A673 (cell line): ENCODE measurements at regions of chr1 and their contacts with region 1.

Region 1: GRCh38 chr1:89908672-89909436 is 86.1 kb upstream of the ZNF326 start:
- DNase-seq: peak; percentile 97
- H3K4me3 ChIP-seq: peak overlapping the region; percentile 0
- H3K27ac ChIP-seq: peak overlapping the region; percentile 92
- H3K4me1 ChIP-seq: peaks cover 87% of the 10 kb centered on the region
- H3K27me3 ChIP-seq: no peaks in the 10 kb centered on the region
- CTCF ChIP-seq: no peak

Region 2: GRCh38 chr1:89706700-89707012 is 202.2 kb before region 1 on chr1:
- CTCF ChIA-PET with region 1: no interaction called
- POLR2A ChIA-PET with region 1: no interaction called
- intact Hi-C with region 1: no loop called
- DNase-seq: no peak
- H3K4me3 ChIP-seq: no peak overlapping the region
- H3K27ac ChIP-seq: no peak overlapping the region
- H3K4me1 ChIP-seq: peaks cover 21% of the 10 kb centered on the region
- H3K27me3 ChIP-seq: no peaks in the 10 kb centered on the region
- CTCF ChIP-seq: no peak

Region 3: GRCh38 chr1:89820422-89821321 is 88.2 kb before region 1 on chr1 and contains the start of gene LRRC8D:
- CTCF ChIA-PET with region 1: no interaction called
- POLR2A ChIA-PET with region 1: no interaction called
- intact Hi-C with region 1: loop called (anchors 5 kb)
- DNase-seq: peak; percentile 90
- H3K4me3 ChIP-seq: peak within 1 kb of the TSS; percentile 86
- H3K27ac ChIP-seq: peak within 1 kb of the TSS; percentile 89
- H3K4me1 ChIP-seq: peaks cover 39% of the 10 kb centered on the region
- H3K27me3 ChIP-seq: no peaks in the 10 kb centered on the region
- CTCF ChIP-seq: no peak
- total RNA-seq, gene LRRC8D: 59.4 and 67.5 TPM in 2 replicates

Region 4: DNA sequence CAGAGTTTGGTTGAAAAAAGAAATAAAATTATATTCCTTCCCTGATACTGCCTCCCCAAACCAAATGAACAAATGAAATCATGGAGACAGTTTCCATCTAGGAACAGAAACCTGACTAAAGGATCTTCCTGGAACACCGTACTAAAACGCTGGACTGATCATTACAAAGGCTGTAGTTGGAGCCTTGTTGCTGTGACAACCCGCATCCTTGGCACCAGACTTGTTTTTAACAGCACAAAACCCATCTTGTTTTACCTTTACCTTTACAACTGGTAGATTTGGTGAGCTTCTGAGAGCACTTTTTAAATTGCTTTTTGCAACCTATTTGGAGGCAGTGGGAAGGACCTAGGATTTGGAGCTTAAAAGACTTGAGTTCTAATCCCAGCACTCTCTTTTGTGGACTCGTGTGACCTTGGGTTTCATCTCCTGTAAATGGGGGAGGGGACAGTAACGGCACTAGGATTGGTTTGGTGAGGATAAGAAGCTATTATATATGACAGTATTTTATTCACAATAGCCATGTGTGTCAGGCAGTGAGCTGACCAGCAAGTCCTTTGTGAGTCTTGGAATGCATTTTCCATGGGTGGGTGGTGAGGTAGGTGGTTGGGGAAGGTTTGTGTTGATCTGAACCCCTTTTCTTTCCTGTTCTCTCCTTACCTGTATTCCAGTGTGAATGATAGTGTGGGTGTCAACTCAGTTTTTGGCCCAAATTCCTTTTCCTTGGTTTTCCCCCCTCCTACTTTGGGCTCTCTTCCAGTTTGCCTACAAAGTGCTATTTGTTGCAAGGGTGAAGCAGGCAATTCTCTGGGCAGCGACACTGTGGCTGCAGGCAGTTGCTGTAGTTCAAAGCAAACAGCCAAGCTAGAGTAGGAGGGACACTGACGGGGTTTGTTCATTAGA is 75.4 kb before region 1 on chr1:
- CTCF ChIA-PET with region 1: no interaction called
- POLR2A ChIA-PET with region 1: no interaction called
- intact Hi-C with region 1: no loop called
- DNase-seq: no peak
- H3K4me3 ChIP-seq: no peak overlapping the region
- H3K27ac ChIP-seq: no peak overlapping the region
- H3K4me1 ChIP-seq: peaks cover 56% of the 10 kb centered on the region
- H3K27me3 ChIP-seq: no peaks in the 10 kb centered on the region
- CTCF ChIP-seq: no peak

Region 5: DNA sequence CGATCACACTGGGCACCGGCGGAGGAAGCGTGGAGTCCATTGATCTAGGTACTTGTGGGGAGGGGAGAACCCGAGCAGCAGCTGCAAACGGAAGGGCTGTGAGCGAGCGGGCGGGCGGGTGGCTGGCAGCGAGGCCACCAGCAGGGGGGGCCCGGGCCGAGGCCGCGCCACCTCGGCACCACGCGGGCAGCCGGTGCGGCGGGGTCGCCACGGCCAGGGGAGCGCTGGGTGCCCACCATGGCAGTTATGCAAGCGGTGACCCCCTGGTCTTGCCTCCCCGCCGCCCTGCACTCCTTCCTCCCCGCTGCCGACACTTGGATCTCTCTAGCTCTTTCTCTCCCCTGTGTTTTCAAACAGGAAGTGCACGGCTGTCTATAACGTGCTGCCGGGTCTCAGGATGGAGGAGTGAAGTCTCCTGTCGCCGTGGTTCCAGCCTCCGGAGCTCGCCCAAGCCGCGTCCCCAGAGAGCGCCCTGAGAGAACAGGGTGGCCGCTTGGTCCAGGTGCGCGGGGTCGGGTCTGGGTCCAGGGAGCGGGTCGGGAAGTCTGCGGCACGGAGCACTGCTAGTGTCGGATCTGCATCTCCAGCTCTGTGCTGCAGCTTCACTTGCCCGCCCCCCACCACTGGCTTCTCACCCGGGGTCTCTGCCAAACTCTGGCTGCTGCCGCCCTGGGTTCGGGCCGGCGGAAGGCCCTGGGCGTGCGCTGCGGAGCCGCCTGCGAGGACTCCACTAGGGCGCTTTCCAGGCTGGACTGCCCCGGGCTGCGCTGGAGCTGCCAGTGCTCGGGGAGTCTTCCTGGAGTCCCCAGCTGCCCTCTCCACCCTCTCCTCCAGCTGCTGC is 65.4 kb before region 1 on chr1:
- CTCF ChIA-PET with region 1: no interaction called
- POLR2A ChIA-PET with region 1: interaction called, 9 read pairs
- intact Hi-C with region 1: loop called (anchors 5 kb)
- DNase-seq: peak; percentile 82
- H3K4me3 ChIP-seq: peak overlapping the region; percentile 57
- H3K27ac ChIP-seq: peak overlapping the region; percentile 49
- H3K4me1 ChIP-seq: peaks cover 44% of the 10 kb centered on the region
- H3K27me3 ChIP-seq: no peaks in the 10 kb centered on the region
- CTCF ChIP-seq: peak; percentile 56

Region 6: DNA sequence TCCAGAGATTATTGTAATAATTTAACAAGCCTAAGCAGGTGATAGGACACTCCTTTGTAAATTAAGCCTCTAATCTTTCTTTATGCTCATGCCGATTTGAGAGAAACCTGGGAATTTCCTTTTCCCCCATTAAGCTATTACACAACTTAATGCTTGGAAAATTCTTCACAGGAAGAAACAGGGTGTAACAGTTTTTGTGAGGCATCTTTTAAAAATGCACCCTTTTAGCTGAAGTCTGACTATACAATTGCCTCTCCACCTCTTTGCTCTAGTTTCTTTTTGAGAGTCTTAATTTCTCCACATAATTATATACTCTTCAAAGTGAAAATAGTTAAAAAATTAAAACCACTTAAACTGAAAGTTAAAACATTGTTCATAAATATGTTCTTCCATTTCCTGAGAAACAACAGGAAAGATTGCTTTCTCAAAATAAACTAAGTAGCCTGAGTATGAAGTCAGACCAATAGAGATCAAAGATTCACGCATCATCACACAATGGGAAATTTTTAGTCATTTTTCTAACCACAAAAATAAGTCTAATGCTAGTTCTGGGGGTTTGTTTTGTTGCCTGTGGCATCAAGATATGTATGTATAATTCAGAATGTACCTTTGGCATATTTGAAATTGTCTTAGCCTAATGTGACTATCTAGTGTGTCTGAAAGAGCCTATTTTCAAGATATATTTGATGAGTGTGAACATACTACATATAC is 53.3 kb before region 1 on chr1:
- CTCF ChIA-PET with region 1: no interaction called
- POLR2A ChIA-PET with region 1: no interaction called
- intact Hi-C with region 1: no loop called
- DNase-seq: no peak
- H3K4me3 ChIP-seq: no peak overlapping the region
- H3K27ac ChIP-seq: no peak overlapping the region
- H3K4me1 ChIP-seq: peaks cover 16% of the 10 kb centered on the region
- H3K27me3 ChIP-seq: no peaks in the 10 kb centered on the region
- CTCF ChIP-seq: no peak

Region 7: DNA sequence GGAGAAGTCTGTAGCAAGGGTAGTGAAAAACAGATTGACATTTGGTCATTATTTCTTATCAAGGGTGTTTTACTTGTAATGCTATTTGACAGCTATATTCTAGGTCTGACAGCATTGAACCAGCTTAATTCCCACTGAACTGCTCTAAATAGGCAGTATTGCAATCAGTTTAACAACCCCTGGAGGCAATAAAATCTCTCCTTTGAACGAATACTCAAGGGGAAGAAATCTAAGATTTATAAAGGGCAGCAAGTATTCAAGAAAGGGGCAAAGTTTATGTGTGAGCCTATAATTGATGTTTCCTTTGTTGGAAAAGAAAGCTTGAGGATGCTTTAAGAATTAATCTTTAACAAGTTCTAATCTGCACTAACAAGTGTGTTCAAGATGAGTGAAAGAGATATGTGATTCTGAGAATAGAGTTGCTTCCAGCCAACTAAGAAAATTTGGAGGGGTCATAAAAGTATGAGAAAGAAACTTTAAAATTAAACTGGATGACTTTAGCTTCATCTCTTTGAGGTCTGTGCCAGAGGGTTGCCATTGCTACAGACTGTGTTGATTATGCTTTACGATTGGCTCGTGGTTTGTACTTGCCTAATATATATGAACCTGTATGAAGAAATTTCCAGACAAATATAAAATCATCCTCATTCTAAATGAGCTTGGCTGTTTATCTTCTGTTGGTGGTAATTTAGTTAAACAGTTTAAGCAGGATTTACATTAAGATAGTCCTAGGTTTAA is 158.5 kb after region 1 on chr1:
- CTCF ChIA-PET with region 1: no interaction called
- POLR2A ChIA-PET with region 1: no interaction called
- intact Hi-C with region 1: loop called (anchors 5 kb)
- DNase-seq: peak; percentile 96
- H3K4me3 ChIP-seq: no peak overlapping the region
- H3K27ac ChIP-seq: peak overlapping the region; percentile 95
- H3K4me1 ChIP-seq: peaks cover 55% of the 10 kb centered on the region
- H3K27me3 ChIP-seq: no peaks in the 10 kb centered on the region
- CTCF ChIP-seq: no peak